CD4-positive, alpha-beta T cell (primary cell): ENCODE measurements at regions of chr17 and their contacts with region 1.

Region 1: DNA sequence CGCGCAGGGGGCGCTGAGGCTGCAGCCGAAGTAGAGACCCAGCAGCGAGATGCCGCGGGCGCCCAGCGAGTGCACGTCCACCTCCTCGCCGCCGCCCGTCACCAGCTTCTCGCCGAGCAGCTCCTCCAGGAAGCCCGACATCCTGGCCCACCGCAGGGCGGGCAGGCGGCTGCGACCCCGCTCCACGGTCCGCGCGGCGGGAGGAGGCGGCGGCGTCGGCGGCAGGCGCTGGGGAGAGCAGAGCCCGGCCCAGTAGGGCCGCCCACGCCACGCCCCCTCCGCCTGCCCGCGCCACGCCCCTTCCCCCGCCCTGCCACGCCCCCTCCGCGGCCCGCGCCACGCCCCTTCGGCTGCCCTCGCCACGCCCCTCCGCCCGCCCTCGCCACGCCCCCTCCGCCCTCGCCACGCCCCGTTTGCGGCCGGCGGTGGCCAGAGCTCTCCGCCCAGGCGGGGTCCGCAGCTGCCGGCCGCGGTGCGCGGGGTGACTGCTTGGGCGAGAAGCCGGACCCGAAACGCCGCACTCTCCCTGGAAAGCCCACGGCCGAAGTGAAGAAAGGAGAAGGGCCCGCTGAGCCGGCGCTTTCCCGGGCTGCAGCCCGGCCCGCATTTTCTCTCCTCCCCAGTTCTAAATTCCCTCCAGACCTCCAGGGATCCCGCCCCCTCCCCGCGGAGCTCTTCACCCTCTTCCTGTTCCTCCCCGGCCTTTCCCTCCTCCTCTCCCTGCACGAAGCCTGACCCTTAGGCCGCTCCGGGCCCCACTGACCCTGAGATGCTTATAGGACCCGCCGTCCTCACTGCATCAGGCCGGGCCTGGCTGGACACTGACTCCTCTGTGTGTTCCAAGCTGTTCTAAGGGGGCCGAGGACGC is at the start of gene NXN:
- DNase-seq: peak; percentile 80 to 94 (median 90)
- ATAC-seq: peak; percentile 73
- H3K4me3 ChIP-seq: peak within 1 kb of the TSS; percentile 67
- H3K4me3 Mint-ChIP-seq: peak within 1 kb of the TSS; percentile 91
- H3K27ac ChIP-seq: peak within 1 kb of the TSS in 1 of 2 donors; percentile 21
- H3K27ac Mint-ChIP-seq: peak within 1 kb of the TSS; percentile 56
- H3K4me1 ChIP-seq: peaks cover 23% of the 10 kb centered on the region
- H3K4me1 Mint-ChIP-seq: peaks cover 17% of the 10 kb centered on the region
- H3K27me3 ChIP-seq: peaks cover 24 to 39% of the 10 kb centered on the region in 2 experiments
- H3K27me3 Mint-ChIP-seq: peaks cover 37% of the 10 kb centered on the region
- CTCF ChIP-seq: no peak
- total RNA-seq, gene NXN: 0.80 to 0.98 TPM

Region 2: DNA sequence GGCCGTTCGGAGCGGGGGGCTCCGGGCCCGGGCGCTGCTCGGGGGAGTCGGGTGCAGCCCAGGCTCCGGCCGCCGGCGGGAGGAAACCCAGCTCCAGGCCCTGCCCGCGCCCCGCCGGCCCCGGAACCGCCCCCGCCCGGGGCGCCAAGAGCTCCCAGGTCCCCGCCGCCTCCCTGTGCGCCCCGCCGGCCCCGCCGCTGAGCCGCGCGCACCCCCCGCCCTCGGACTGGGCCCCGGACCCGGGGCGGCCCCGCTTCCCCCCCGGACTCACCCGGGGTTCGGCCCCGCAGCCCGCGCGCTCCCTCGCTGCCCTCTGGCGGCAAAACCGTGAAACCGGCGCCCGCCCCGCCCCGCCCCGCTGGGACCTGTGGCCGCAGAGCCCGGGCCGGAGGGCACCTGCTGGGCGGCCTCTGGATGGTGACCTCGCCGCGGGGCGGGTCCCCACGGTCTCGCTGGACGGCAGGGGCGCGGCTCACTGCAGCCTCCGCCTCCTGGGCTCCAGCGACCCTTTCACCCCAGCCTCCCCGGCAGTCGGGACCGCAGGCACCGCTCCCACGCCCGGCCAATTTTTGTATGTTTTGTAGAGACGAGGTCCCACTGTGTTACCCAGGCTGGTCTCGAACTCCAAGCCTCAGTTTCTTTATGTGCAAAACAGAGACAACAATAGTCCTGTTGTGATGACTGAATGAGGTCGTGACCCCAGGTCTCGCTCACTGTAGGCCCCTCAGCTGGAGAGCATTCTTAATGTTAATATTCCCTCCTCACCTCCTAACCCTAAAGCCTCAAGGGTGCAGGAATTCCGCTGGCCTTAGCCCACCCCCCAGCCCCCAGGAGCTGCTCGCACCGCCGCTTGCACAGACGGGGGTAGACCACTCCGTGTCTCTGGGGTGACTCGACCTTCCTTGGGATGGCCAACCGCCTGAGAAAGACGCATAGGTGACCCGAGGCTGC is 593.6 kb before region 1 on chr17:
- CTCF ChIA-PET with region 1: no interaction called
- POLR2A ChIA-PET with region 1: no interaction called
- intact Hi-C with region 1: loop called in 1 of 2 experiments (anchors 10 kb)
- DNase-seq: peak; percentile 12 to 81 (median 68)
- ATAC-seq: peak; percentile 55
- H3K4me3 ChIP-seq: no peak overlapping the region
- H3K4me3 Mint-ChIP-seq: peak overlapping the region; percentile 87
- H3K27ac ChIP-seq: no peak overlapping the region
- H3K27ac Mint-ChIP-seq: no peak overlapping the region
- H3K4me1 ChIP-seq: peaks cover 15% of the 10 kb centered on the region
- H3K4me1 Mint-ChIP-seq: peaks cover 36% of the 10 kb centered on the region
- H3K27me3 ChIP-seq: peaks cover 0 to 3% of the 10 kb centered on the region in 2 experiments
- H3K27me3 Mint-ChIP-seq: peaks cover 6% of the 10 kb centered on the region
- CTCF ChIP-seq: peak; percentile 34

Region 3: GRCh38 chr17:681738-682529 is 297.8 kb before region 1 on chr17:
- CTCF ChIA-PET with region 1: no interaction called
- POLR2A ChIA-PET with region 1: no interaction called
- intact Hi-C with region 1: no loop called
- DNase-seq: peak in 1 of 14 experiments; percentile 12
- ATAC-seq: no peak
- H3K4me3 ChIP-seq: no peak overlapping the region
- H3K4me3 Mint-ChIP-seq: peak overlapping the region; percentile 1
- H3K27ac ChIP-seq: no peak overlapping the region
- H3K27ac Mint-ChIP-seq: peak overlapping the region; percentile 52
- H3K4me1 ChIP-seq: peaks cover 6% of the 10 kb centered on the region
- H3K4me1 Mint-ChIP-seq: peaks cover 28% of the 10 kb centered on the region
- H3K27me3 ChIP-seq: no peaks in the 10 kb centered on the region
- H3K27me3 Mint-ChIP-seq: no peaks in the 10 kb centered on the region
- CTCF ChIP-seq: no peak

Region 4: DNA sequence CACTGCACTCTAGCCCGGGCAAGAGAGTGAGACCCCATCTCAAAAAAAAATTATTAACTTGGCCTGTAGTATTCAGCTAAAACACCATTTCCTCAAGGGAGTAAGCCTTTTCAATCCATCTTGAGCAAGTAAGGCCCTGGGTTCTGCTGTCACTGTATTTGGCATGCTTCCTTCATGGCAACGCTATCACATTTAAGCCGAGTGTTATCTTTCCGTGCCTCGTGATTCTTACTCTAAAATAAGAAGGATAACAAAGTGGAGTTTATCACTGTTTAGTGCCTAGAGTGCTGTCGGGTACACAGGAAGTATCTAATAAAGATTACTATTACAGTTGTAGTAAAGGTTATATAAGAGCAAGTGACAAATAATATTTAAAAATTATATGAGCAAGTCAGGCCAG is 273.9 kb before region 1 on chr17:
- CTCF ChIA-PET with region 1: no interaction called
- POLR2A ChIA-PET with region 1: no interaction called
- intact Hi-C with region 1: loop called in 1 of 2 experiments (anchors 5 kb)
- DNase-seq: no peak
- ATAC-seq: no peak
- H3K4me3 ChIP-seq: no peak overlapping the region
- H3K4me3 Mint-ChIP-seq: no peak overlapping the region
- H3K27ac ChIP-seq: no peak overlapping the region
- H3K27ac Mint-ChIP-seq: no peak overlapping the region
- H3K4me1 ChIP-seq: peaks cover 2% of the 10 kb centered on the region
- H3K4me1 Mint-ChIP-seq: peaks cover 21% of the 10 kb centered on the region
- H3K27me3 ChIP-seq: no peaks in the 10 kb centered on the region
- H3K27me3 Mint-ChIP-seq: no peaks in the 10 kb centered on the region
- CTCF ChIP-seq: no peak

Region 5: DNA sequence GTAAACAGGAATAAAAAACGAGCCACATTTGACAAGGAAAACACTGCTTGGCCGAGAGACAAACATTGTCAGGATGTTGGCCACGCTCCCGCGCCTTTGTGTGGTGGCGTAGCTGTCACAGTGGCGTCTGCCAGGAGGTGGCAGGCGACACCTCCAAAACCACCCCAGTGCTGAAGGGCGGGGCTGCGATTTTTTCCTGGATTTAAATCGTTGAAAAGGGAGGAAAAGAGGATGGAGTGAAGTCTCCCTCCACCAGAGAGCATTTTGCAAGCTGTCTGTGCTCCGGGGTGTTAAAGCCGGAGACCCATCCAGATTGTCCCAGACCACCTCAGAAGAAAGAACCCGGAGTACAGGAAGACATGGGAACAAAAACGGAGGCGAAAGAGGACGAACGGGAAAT is 184.9 kb before region 1 on chr17:
- CTCF ChIA-PET with region 1: interaction called, 16 read pairs
- POLR2A ChIA-PET with region 1: interaction called, 5 read pairs
- intact Hi-C with region 1: loop called in 1 of 2 experiments (anchors 1 kb)
- DNase-seq: peak; percentile 14 to 68 (median 26)
- ATAC-seq: peak; percentile 77
- H3K4me3 ChIP-seq: no peak overlapping the region
- H3K4me3 Mint-ChIP-seq: peak overlapping the region; percentile 31
- H3K27ac ChIP-seq: no peak overlapping the region
- H3K27ac Mint-ChIP-seq: no peak overlapping the region
- H3K4me1 ChIP-seq: peaks cover 8% of the 10 kb centered on the region
- H3K4me1 Mint-ChIP-seq: peaks cover 6% of the 10 kb centered on the region
- H3K27me3 ChIP-seq: no peaks in the 10 kb centered on the region
- H3K27me3 Mint-ChIP-seq: no peaks in the 10 kb centered on the region
- CTCF ChIP-seq: peak; percentile 49

Region 6: DNA sequence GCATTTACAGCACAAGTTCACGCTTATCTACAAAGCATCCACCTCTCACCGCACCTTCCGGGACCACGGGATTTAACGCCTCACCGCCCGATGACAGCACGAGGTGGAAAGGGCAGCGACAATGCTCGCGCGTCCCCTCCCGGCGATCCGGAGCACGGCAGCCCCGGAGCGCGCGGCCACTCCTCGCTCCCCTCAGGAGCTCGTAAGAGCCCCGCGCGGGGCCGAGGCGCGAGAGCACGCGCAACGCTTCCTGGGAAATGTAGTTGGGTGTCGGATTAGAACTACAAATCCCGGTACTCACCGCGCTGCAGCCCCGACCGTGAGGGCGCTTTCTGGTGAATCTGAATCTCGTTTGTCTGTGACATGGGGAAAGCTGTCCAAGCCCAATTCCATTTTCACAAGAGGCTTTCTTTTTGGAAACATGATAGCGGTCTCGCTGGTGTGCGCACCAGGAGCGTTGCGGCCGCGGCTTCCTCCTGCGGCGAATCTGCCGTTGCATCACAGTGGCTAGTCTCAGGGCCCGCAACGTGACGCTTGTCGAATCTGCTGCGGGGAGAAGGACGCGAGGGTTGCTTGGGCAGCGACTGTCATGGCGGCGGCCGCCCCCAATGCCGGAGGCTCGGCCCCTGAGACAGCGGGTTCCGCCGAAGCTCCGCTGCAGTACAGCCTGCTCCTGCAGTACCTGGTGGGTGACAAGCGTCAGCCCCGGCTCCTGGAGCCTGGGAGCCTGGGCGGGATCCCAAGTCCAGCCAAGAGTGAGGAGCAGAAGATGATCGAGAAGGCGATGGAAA is 17.0 kb after region 1 on chr17 and contains the start of gene TIMM22:
- CTCF ChIA-PET with region 1: interaction called, 53 read pairs
- POLR2A ChIA-PET with region 1: interaction called, 44 read pairs
- intact Hi-C with region 1: loop called (anchors 1 kb)
- DNase-seq: peak; percentile 86 to 98 (median 90)
- ATAC-seq: peak; percentile 92
- H3K4me3 ChIP-seq: peak within 1 kb of the TSS; percentile 100
- H3K4me3 Mint-ChIP-seq: peak within 1 kb of the TSS; percentile 100
- H3K27ac ChIP-seq: peak within 1 kb of the TSS; percentile 73 to 86
- H3K27ac Mint-ChIP-seq: peak within 1 kb of the TSS; percentile 93
- H3K4me1 ChIP-seq: peaks cover 24% of the 10 kb centered on the region
- H3K4me1 Mint-ChIP-seq: peaks cover 27% of the 10 kb centered on the region
- H3K27me3 ChIP-seq: no peaks in the 10 kb centered on the region
- H3K27me3 Mint-ChIP-seq: no peaks in the 10 kb centered on the region
- CTCF ChIP-seq: peak; percentile 93
- total RNA-seq, gene TIMM22: 10.2 to 10.9 TPM